Head of caudate nucleus (tissue), 42 donors: ENCODE measurements at regions of chrX and their contacts with region 1.

Region 1: DNA sequence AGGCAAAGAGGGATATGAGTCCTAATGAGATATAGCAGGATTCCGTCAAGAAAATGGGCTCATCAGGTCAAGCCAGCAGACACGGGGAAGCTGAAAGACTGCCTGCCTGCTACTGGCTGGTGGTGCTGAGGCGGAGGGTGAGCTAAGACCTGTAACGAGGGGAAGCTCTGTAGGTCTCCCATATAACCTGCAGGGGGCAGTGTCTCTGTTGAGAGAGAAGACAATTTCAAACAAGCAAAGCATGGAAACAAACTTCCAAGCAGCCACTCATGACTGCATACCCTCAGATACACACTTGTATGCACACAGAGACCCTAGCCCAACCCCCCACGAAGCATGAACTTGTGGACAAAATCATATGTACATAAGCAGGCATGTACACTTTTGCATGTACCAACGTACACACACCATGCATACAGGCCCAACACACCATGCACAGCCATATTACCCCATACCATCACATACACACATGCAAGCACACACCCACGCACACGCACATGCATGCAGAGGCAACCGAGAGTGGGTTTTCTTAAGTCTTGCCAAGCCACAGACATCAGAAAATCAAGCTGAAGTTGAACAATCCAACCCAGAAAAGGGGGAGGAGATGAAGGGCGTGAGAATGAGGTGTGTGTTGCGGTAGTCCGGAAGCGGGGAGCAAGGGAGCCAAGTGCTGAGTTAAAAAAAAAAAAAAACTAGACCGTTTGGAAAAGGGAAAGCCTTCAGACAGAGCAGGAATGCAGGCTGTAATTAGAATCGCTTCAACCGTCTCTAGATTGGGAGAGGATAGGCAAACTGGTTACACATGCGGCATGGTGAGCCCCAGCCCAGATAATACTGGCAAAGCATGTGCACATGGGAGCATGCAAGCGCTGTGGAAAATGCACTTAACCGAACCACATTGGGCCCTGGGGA is 71.0 kb downstream of the PJA1 start:
- DNase-seq: peak in 39 of 42 donors; percentile 13 to 82 (median 57)

Region 2: DNA sequence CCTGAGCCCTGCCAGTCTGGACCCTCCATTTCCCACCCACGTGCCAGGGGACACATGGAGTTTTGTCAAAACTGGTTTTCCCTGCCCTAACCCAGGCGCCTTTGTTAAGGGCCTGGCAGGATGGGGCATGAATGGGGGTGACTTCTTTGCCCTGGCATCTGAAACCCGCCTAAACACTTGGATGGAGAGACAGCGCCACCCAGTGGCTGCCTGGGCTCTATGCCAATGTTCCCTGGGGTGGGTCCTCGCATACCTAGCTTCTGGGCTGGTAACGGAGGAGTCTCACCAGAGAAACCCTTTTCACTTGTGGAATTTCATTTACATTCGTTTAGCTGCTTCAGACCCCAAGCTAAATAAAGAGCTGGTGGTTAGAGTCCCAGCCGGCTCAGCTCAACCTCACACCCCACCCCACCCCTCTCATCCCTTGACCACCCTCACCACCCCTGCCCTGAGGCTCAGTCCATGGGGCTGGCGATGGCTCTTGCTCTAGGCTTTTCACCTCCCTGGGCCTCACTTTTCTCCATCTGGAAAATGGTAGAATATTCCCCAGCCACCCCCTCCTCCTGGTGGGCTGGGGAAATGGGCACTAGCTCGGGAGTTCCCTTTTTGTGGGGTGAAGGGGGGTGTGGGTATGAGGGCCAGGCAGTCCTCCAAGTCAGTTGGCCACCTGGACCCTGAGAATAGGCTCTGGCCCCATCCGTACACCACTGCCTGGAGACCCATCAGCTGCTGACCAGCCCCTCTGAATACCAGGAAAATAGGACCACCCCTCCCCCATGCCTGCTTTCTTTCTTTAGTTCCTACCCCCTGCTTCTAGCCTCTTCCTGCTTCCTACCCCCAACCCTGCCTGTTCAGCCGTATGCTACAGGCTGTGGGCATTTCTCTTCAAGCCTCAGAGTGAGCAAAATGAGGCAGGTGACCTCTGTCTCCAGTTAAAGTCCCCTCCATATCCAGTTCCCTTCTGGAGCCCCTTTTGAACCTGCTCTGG is 128.2 kb after region 1 on chrX:
- intact Hi-C with region 1: loop called (anchors 5 kb)
- DNase-seq: peak; percentile 42 to 90 (median 79)

Region 3: DNA sequence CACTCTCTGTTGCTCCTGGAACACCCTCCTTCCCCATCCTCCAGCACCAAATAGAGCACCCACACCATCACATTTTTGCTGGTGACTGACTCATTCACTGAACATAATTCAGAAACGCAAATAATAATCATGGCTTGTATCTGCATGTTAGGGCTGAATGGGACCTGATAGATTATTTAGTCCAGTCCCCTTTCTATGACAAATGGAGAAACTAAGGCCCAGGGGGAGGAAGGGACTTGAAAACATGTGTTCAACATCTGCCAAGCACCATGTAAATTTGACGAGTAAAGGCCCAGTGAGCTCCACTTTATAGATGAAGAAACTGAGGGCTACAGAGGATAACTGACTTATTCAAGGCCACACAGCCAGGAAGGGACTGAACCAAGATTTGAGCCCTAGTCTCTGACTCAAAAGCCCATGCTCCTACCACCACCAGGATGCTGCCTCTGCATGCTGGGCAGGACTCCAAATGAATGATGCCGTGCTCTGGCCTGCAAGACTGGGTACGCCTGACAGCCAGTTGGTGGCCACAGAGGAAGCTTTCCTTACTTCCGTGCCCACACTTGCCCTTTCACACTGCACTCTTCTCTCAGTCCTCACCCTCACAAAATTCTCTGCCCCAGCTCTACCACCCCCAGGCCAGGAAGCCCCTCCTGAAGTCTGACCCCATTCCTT is 204.4 kb after region 1 on chrX:
- intact Hi-C with region 1: no loop called
- DNase-seq: peak in 1 of 42 donors; percentile 2